Sigmoid colon (tissue), 7 donors: ENCODE measurements at regions of chr13 and their contacts with region 1.

Region 1: DNA sequence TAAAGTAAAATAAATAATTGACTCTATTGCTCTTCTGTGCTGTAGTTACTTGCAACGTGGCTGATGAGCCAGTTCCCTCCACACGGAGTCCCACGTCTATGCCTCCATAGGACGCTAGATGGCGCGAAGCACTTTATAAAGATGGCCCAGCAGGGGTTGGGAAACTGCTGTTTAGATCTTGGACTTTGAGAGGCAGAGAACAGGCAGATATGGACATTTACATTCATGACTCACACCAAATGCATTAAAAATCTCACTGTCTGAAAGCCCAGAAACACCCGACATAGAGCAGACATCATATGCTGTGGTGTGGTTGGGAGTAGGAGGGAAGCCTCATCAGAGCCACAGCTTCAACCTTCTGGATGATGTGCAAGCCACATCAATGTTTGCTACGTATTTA is 643.1 kb upstream of the ARGLU1 start:
- DNase-seq: peak; percentile 74
- H3K4me3 ChIP-seq: no peak overlapping the region
- H3K27ac ChIP-seq: no peak overlapping the region
- H3K4me1 ChIP-seq: peaks cover 0 to 8% (median 2%) of the 10 kb centered on the region in 4 donors
- H3K27me3 ChIP-seq: no peaks in the 10 kb centered on the region
- CTCF ChIP-seq: peak; percentile 10 to 73 (median 62)
- EP300 ChIP-seq: no peak
- POLR2A ChIP-seq: no peak

Region 2: DNA sequence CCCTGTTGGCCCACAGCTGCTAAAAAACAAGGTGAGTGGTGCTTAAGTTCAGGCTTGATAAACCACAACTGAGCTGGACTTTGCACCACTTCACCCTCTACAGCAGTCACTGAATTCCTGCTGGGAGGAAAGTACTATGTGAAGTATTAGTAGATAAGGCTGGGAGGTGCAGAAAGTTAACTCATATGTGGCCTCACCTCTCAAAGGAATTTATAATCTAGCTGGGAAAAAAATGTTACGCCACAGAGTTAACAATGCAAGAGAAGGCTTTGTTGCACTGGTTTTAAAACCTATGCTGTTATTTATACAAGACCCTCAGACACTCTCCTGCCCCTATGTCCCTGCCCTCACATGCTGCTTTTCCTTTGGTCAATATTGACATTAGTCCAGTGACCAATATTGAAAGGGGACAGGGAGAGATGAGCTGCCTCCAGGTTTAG is 943.4 kb after region 1 on chr13:
- intact Hi-C with region 1: loop called (anchors 5 kb)
- DNase-seq: no peak
- H3K4me3 ChIP-seq: no peak overlapping the region
- H3K27ac ChIP-seq: no peak overlapping the region
- H3K4me1 ChIP-seq: no peaks in the 10 kb centered on the region
- H3K27me3 ChIP-seq: no peaks in the 10 kb centered on the region
- CTCF ChIP-seq: no peak
- EP300 ChIP-seq: no peak
- POLR2A ChIP-seq: no peak